K562 (cell line): ENCODE measurements at regions of chr1 and their contacts with region 1.

Region 1: DNA sequence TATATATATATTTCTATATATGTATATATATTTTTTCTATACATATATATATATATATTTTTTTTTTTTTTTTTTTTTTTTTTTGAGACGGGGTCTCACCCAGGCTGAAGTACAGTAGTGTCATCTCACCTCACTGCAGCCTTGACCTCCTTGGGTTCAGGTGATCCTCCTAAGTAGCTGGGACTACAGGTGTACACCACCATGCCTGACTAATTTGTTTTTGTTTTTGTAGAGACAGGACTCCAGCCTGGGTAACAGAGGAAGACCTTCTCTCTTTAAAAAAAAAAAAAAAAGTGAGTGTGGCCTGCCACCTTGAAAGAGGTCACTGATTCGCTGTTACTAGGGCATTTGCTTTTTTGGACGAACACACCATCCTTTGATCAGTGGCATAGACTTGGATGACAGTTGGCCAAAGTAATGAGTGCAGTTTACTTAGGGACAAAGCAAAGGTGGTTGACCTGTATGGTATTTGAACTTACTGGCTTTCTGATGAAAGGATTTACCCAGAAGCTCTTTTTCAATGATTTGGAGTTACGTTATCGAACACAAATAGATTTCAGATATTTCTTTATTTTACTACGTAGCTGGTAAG is 10.8 kb downstream of the SLC25A33 start:
- DNase-seq: no peak
- ATAC-seq: no peak
- H3K4me3 ChIP-seq: no peak overlapping the region
- H3K27ac ChIP-seq: no peak overlapping the region
- H3K4me1 ChIP-seq: peaks cover 0 to 2% of the 10 kb centered on the region in 2 experiments; a peak in 2 of 5 replicates
- H3K27me3 ChIP-seq: no peaks in the 10 kb centered on the region
- CTCF ChIP-seq: no peak
- EP300 ChIP-seq: no peak
- POLR2A ChIP-seq: no peak
- RAD21 ChIP-seq: no peak

Region 2: DNA sequence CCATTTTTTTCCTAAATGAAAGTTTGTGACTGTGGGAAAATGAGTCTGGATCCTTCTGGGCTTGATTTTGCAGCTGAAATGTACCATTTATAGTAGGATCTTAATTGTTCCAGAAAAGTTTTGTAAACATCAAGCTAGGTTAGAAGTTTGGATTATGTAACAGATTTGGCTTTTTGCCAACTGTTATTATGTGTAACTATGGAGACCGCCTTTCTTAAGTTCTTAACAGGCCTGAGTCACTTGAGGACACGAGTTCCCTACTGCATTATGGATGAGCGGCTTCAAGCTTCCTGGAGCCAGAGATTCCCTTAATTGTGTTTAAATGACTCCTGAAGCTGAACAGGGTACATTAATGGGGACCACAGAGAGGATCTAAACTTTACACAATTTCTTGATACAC is 11.4 kb after region 1 on chr1:
- CTCF ChIA-PET with region 1: interaction called, 4 read pairs
- POLR2A ChIA-PET with region 1: interaction called, 10 read pairs
- in situ Hi-C with region 1: no loop called
- intact Hi-C with region 1: no loop called
- DNase-seq: peak; percentile 33 to 56 (median 48)
- ATAC-seq: peak; percentile 72
- H3K4me3 ChIP-seq: no peak overlapping the region
- H3K27ac ChIP-seq: no peak overlapping the region
- H3K4me1 ChIP-seq: peaks cover 3 to 8% of the 10 kb centered on the region in 2 experiments; a peak in 2 of 5 replicates
- H3K27me3 ChIP-seq: no peaks in the 10 kb centered on the region
- CTCF ChIP-seq: no peak; a peak in 1 of 6 replicates
- EP300 ChIP-seq: 0 out of 2 replicates have a peak, but pooled peaks have one; percentile 1
- POLR2A ChIP-seq: no peak
- RAD21 ChIP-seq: no peak

Region 3: DNA sequence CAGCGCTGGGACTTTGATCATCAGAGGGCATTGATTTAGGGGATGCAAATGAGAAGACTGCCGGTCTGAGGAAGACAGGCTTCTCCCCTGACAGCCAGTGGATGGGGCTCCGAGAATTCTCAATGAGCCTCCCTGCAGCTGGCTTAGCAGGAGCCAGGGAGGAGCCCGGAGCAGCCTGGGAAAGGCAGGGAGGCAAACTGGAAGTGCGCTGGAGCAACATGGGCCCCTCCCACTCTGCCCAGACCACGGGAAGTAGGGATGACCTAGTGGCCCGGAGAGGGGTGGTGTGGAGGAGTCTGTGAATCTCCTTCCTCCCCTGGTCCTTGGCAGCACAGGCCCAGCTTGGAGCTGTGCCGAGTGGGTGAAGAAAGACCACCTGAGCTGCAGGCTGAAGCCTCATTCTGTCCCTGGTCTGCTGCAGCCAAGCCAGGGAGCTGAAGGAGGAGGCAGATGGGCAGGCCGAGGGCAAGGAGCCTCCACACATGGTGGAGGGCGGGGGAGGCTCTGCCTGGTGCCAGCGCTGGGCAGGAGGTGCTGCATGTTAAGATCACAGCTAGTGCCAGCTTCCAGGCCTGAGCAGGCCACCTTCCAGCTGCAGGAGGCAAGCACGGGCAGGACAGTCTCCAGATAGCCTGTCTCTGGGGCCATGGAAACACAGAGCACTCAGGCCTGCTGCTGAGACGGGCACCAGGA is 285.9 kb after region 1 on chr1:
- CTCF ChIA-PET with region 1: no interaction called
- POLR2A ChIA-PET with region 1: no interaction called
- in situ Hi-C with region 1: no loop called
- intact Hi-C with region 1: no loop called
- DNase-seq: peak in 2 of 4 experiments; percentile 12 to 31
- ATAC-seq: peak; percentile 20; the same call in 2 of the 3 replicates
- H3K4me3 ChIP-seq: no peak overlapping the region
- H3K27ac ChIP-seq: no peak overlapping the region
- H3K4me1 ChIP-seq: peaks cover 0 to 10% of the 10 kb centered on the region in 2 experiments; a peak in 1 of 5 replicates
- H3K27me3 ChIP-seq: peaks cover 47 to 73% of the 10 kb centered on the region in 2 experiments
- CTCF ChIP-seq: no peak
- EP300 ChIP-seq: no peak
- POLR2A ChIP-seq: no peak
- RAD21 ChIP-seq: no peak